Activated CD4-positive, alpha-beta memory T cell treated with anti-CD3 and anti-CD28 coated beads for 36 hours (primary cell): ENCODE measurements at regions of chr9 and their contacts with region 1.

Region 1: GRCh38 chr9:116589392-116590354 is 97.4 kb upstream of the TRIM32 start:
- DNase-seq: peak; percentile 29
- H3K4me3 Mint-ChIP-seq: no peak overlapping the region
- H3K27ac Mint-ChIP-seq: no peak overlapping the region
- H3K4me1 Mint-ChIP-seq: no peaks in the 10 kb centered on the region
- H3K27me3 Mint-ChIP-seq: no peaks in the 10 kb centered on the region

Region 2: GRCh38 chr9:116646661-116647512 is 57.2 kb after region 1 on chr9:
- CTCF ChIA-PET with region 1: no interaction called
- POLR2A ChIA-PET with region 1: no interaction called
- intact Hi-C with region 1: loop called (anchors 1 kb)
- DNase-seq: no peak
- H3K4me3 Mint-ChIP-seq: no peak overlapping the region
- H3K27ac Mint-ChIP-seq: no peak overlapping the region
- H3K4me1 Mint-ChIP-seq: no peaks in the 10 kb centered on the region
- H3K27me3 Mint-ChIP-seq: no peaks in the 10 kb centered on the region

Region 3: GRCh38 chr9:116661037-116661954 is 71.6 kb after region 1 on chr9:
- CTCF ChIA-PET with region 1: interaction called, 5 read pairs
- POLR2A ChIA-PET with region 1: no interaction called
- intact Hi-C with region 1: loop called (anchors 1 kb)
- DNase-seq: no peak
- H3K4me3 Mint-ChIP-seq: no peak overlapping the region
- H3K27ac Mint-ChIP-seq: no peak overlapping the region
- H3K4me1 Mint-ChIP-seq: no peaks in the 10 kb centered on the region
- H3K27me3 Mint-ChIP-seq: no peaks in the 10 kb centered on the region

Region 4: DNA sequence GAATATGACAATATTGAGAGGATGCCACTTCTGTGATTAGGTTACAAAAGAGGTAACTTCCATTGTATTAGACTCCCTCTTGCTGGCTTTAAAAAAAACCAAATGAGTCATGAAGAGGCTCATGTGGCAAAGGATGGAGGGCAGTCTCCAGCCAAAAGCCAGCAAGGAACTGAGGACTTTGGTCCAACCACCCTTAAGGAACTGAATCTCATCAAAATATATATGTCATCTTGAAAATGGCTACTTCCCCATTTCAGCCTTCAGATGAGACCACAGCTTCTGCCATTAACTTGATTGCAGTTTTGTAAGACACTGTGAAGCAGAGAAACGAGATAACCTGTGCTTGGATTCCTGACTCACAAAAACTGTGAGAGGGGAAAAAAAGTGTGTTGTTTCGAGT is 81.9 kb after region 1 on chr9:
- CTCF ChIA-PET with region 1: no interaction called
- POLR2A ChIA-PET with region 1: no interaction called
- intact Hi-C with region 1: no loop called
- DNase-seq: no peak
- H3K4me3 Mint-ChIP-seq: no peak overlapping the region
- H3K27ac Mint-ChIP-seq: no peak overlapping the region
- H3K4me1 Mint-ChIP-seq: no peaks in the 10 kb centered on the region
- H3K27me3 Mint-ChIP-seq: no peaks in the 10 kb centered on the region

Region 5: DNA sequence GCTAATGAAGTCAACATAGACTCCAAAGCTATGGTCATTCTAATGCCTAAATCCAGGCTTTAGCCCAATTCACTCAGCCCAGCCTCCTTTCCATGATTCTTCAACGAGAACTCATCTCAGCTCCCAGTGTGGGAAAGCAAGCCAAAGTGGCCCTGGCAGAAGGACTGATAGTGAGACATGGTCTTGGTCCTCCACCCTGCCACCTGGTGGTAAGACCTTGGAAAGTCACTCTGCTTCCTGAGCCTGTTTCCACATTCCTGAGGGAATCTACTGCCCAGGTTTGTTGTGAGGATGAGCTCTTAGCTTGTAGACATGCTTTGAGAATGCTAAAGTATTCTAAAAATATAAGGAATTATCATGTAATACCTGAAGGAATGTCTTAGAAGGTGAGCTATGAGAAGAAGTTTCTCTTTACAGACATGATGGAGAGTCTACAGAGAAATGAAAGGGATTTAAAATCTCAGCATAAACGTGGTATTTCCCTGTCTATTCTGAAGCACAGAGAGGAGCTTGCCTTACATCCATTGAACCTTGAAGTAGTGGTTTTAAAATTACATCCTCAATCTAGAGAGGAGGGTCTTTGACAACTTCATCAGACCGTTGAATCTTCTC is 270.9 kb after region 1 on chr9:
- CTCF ChIA-PET with region 1: interaction called, 3 read pairs
- POLR2A ChIA-PET with region 1: no interaction called
- intact Hi-C with region 1: loop called (anchors 5 kb)
- DNase-seq: peak; percentile 27
- H3K4me3 Mint-ChIP-seq: no peak overlapping the region
- H3K27ac Mint-ChIP-seq: no peak overlapping the region
- H3K4me1 Mint-ChIP-seq: no peaks in the 10 kb centered on the region
- H3K27me3 Mint-ChIP-seq: peaks cover 4% of the 10 kb centered on the region